Adrenal gland (tissue), 19 donors: ENCODE measurements at regions of chr3 and their contacts with region 1.

Region 1: GRCh38 chr3:126679318-126679751 is 24.4 kb upstream of the TXNRD3 start:
- DNase-seq: peak; percentile 75 to 95 (median 85)
- H3K4me3 ChIP-seq: no peak overlapping the region
- H3K27ac ChIP-seq: peak overlapping the region in 1 of 5 donors; percentile 52
- H3K4me1 ChIP-seq: peaks cover 0 to 18% of the 10 kb centered on the region in 2 donors
- H3K27me3 ChIP-seq: no peaks in the 10 kb centered on the region
- CTCF ChIP-seq: peak; percentile 74 to 96 (median 94)
- POLR2A ChIP-seq: no peak

Region 2: GRCh38 chr3:126752303-126752842 is 73.0 kb after region 1 on chr3:
- intact Hi-C with region 1: loop called in 1 of 2 experiments (anchors 2 kb)
- DNase-seq: peak; percentile 73 to 91 (median 77)
- H3K4me3 ChIP-seq: no peak overlapping the region
- H3K27ac ChIP-seq: no peak overlapping the region
- H3K4me1 ChIP-seq: peaks cover 0 to 6% of the 10 kb centered on the region in 2 donors
- H3K27me3 ChIP-seq: no peaks in the 10 kb centered on the region
- CTCF ChIP-seq: peak; percentile 78 to 92 (median 88)
- POLR2A ChIP-seq: no peak

Region 3: DNA sequence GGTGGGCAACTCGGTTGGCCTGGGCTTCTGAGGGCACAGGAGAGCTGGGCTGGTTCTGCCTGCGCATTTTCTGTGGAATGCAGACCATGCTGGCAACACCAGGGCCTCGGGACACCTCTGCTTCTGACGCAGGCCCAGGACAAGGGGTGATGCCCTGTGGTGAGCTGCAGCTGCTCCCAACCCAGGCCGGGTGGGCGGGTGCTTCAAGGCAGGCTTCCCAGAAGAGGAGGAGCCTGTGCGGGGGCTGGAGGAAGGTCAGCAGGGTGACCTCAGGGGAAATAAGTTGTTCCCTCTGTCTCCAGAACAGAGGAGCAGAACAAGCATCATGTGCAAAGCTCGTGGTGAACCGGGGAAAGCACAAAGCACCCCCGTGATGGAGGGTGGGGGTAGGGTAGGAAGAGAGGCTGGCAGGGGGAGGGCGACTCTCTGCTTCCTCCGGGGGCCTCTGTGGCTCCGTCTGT is 292.6 kb after region 1 on chr3:
- intact Hi-C with region 1: loop called in 1 of 2 experiments (anchors 10 kb)
- DNase-seq: peak; percentile 59 to 87 (median 77)
- H3K4me3 ChIP-seq: no peak overlapping the region
- H3K27ac ChIP-seq: peak overlapping the region in 3 of 5 donors; percentile 19 to 83 (median 76)
- H3K4me1 ChIP-seq: peaks cover 0 to 8% of the 10 kb centered on the region in 2 donors
- H3K27me3 ChIP-seq: no peaks in the 10 kb centered on the region
- CTCF ChIP-seq: no peak
- POLR2A ChIP-seq: no peak

Region 4: DNA sequence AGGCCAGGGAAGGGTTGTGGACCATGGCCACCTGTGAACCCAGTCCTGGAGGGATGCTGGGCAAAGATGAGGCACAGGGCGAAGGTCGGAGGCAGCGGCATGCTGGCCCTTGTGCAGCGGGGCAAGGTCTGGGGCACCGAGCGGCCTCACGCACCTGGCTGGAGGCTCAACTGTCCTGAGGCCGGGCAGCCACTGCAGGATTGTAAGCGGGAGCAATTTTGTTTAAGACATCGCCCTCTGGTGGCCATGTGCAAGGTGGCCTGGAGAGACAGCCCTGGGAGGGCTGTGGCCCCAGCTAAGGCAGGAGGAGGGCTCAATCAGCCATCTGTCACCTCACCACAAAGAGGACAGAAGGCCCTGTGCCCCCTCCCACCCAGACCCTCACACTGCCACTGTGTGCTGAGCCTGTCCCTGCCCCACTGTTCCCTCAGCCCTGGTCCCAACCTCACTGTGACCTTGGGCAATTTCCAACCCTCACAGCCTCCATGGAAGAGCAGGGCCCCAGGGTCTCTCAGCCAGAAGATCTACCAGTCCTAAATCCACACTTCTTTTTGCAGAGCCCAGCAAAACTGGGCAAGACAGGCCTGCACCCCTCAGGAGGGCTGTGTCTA is 865.0 kb after region 1 on chr3:
- intact Hi-C with region 1: loop called (anchors 5 to 10 kb)
- DNase-seq: peak; percentile 65 to 90 (median 81)
- H3K4me3 ChIP-seq: no peak overlapping the region
- H3K27ac ChIP-seq: no peak overlapping the region
- H3K4me1 ChIP-seq: peaks cover 4 to 11% of the 10 kb centered on the region in 2 donors
- H3K27me3 ChIP-seq: no peaks in the 10 kb centered on the region
- CTCF ChIP-seq: peak; percentile 62 to 83 (median 73)
- POLR2A ChIP-seq: no peak